Panc1 (cell line): ENCODE measurements at regions of chr5 and their contacts with region 1.

Region 1: DNA sequence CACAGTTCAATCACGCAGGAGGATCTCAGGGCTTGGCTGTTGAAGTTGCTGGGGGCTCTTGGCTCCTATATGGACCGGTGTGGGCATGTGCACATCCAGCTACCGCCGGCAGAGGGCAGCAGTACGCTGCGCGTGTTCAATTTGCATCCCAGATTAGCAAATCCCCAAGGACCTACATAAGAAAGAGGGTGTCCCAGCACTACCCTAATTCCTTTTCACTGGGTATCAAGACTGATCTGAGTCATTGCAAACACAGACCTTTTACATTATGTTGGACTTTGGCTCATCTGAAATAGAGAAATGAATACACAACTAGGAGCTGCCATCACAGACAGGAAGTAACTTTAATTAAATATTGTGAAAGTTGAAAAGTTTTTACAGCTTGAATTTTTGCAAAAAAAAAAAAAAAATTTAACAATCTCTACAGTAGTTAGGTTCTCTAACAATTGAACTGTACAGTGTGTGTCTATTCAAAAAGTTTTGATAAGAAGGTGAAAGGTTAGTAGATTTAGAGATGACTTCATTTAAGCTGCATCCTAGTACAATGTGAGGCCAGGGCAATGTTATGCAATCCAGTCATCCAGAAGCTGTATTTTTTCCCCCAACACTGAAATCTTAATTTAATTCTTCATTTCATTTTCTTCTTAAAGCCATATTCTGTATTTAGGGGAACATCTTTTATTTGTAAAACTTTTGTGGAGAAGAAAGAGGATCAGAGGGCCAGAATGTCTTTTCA is 404.0 kb downstream of the EBF1 start:
- DNase-seq: peak; percentile 75
- ATAC-seq: peak; percentile 85
- H3K4me3 ChIP-seq: no peak overlapping the region
- H3K27ac ChIP-seq: no peak overlapping the region
- H3K4me1 ChIP-seq: no peaks in the 10 kb centered on the region
- H3K27me3 ChIP-seq: peaks cover 6% of the 10 kb centered on the region
- CTCF ChIP-seq: peak; percentile 95

Region 2: GRCh38 chr5:158174918-158175851 is 520.6 kb before region 1 on chr5:
- CTCF ChIA-PET with region 1: interaction called, 9 read pairs
- POLR2A ChIA-PET with region 1: no interaction called
- in situ Hi-C with region 1: no loop called
- intact Hi-C with region 1: loop called (anchors 5 kb)
- DNase-seq: peak; percentile 20
- ATAC-seq: peak; percentile 90
- H3K4me3 ChIP-seq: no peak overlapping the region
- H3K27ac ChIP-seq: no peak overlapping the region
- H3K4me1 ChIP-seq: no peaks in the 10 kb centered on the region
- H3K27me3 ChIP-seq: no peaks in the 10 kb centered on the region; the same call in 1 of the 2 replicates
- CTCF ChIP-seq: peak; percentile 80

Region 3: GRCh38 chr5:159106569-159107282 is 411.0 kb after region 1 on chr5:
- CTCF ChIA-PET with region 1: interaction called, 18 read pairs
- POLR2A ChIA-PET with region 1: no interaction called
- in situ Hi-C with region 1: no loop called
- intact Hi-C with region 1: loop called (anchors 1 kb)
- DNase-seq: peak; percentile 27
- ATAC-seq: peak; percentile 92
- H3K4me3 ChIP-seq: peak overlapping the region in 1 of 2 experiments; percentile 28; a peak in 2 of 4 replicates
- H3K27ac ChIP-seq: no peak overlapping the region
- H3K4me1 ChIP-seq: peaks cover 11% of the 10 kb centered on the region; the same call in 1 of the 2 replicates
- H3K27me3 ChIP-seq: peaks cover 38% of the 10 kb centered on the region
- CTCF ChIP-seq: peak; percentile 92

Region 4: GRCh38 chr5:159133041-159133741 is 437.4 kb after region 1 on chr5:
- CTCF ChIA-PET with region 1: interaction called, 4 read pairs
- POLR2A ChIA-PET with region 1: no interaction called
- in situ Hi-C with region 1: no loop called
- intact Hi-C with region 1: loop called (anchors 1 kb)
- DNase-seq: peak; percentile 52
- ATAC-seq: peak; percentile 65
- H3K4me3 ChIP-seq: peak overlapping the region in 1 of 2 experiments; percentile 31; a peak in 1 of 4 replicates
- H3K27ac ChIP-seq: no peak overlapping the region
- H3K4me1 ChIP-seq: peaks cover 4% of the 10 kb centered on the region; the same call in 1 of the 2 replicates
- H3K27me3 ChIP-seq: peaks cover 2% of the 10 kb centered on the region; the same call in 1 of the 2 replicates
- CTCF ChIP-seq: peak; percentile 83